CD4-positive, alpha-beta memory T cell (primary cell): ENCODE measurements at regions of chr3 and their contacts with region 1.

Region 1: GRCh38 chr3:3200632-3201212 is 21.2 kb upstream of the CRBN start:
- DNase-seq: peak in 1 of 5 donors; percentile 33
- H3K4me3 ChIP-seq: no peak overlapping the region
- H3K4me3 Mint-ChIP-seq: peak overlapping the region in 7 of 8 donors; percentile 10 to 74 (median 55)
- H3K27ac ChIP-seq: no peak overlapping the region
- H3K27ac Mint-ChIP-seq: peak overlapping the region in 3 of 7 donors; percentile 2 to 63 (median 4)
- H3K4me1 ChIP-seq: peaks cover 12% of the 10 kb centered on the region
- H3K4me1 Mint-ChIP-seq: peaks cover 16 to 32% (median 24%) of the 10 kb centered on the region in 4 donors
- H3K27me3 ChIP-seq: no peaks in the 10 kb centered on the region
- H3K27me3 Mint-ChIP-seq: peaks cover 0 to 2% of the 10 kb centered on the region in 2 donors

Region 2: GRCh38 chr3:2166552-2166951 is 1034.2 kb before region 1 on chr3:
- CTCF ChIA-PET with region 1: no interaction called
- POLR2A ChIA-PET with region 1: no interaction called
- intact Hi-C with region 1: no loop called
- DNase-seq: no peak
- H3K4me3 ChIP-seq: no peak overlapping the region
- H3K4me3 Mint-ChIP-seq: no peak overlapping the region
- H3K27ac ChIP-seq: no peak overlapping the region
- H3K27ac Mint-ChIP-seq: no peak overlapping the region
- H3K4me1 ChIP-seq: no peaks in the 10 kb centered on the region
- H3K4me1 Mint-ChIP-seq: no peaks in the 10 kb centered on the region
- H3K27me3 ChIP-seq: no peaks in the 10 kb centered on the region
- H3K27me3 Mint-ChIP-seq: no peaks in the 10 kb centered on the region

Region 3: GRCh38 chr3:3998140-3998922 is 797.6 kb after region 1 on chr3:
- CTCF ChIA-PET with region 1: interaction called, 20 read pairs
- POLR2A ChIA-PET with region 1: no interaction called
- intact Hi-C with region 1: no loop called
- DNase-seq: peak in 3 of 5 donors; percentile 3 to 12 (median 8)
- H3K4me3 ChIP-seq: no peak overlapping the region
- H3K4me3 Mint-ChIP-seq: no peak overlapping the region
- H3K27ac ChIP-seq: no peak overlapping the region
- H3K27ac Mint-ChIP-seq: no peak overlapping the region
- H3K4me1 ChIP-seq: no peaks in the 10 kb centered on the region
- H3K4me1 Mint-ChIP-seq: no peaks in the 10 kb centered on the region
- H3K27me3 ChIP-seq: no peaks in the 10 kb centered on the region
- H3K27me3 Mint-ChIP-seq: no peaks in the 10 kb centered on the region

Region 4: GRCh38 chr3:4271834-4272233 is 1071.1 kb after region 1 on chr3:
- CTCF ChIA-PET with region 1: interaction called, 15 read pairs
- POLR2A ChIA-PET with region 1: no interaction called
- intact Hi-C with region 1: no loop called
- DNase-seq: peak in 2 of 5 donors; percentile 1 to 11
- H3K4me3 ChIP-seq: no peak overlapping the region
- H3K4me3 Mint-ChIP-seq: peak overlapping the region in 1 of 8 donors; percentile 34
- H3K27ac ChIP-seq: no peak overlapping the region
- H3K27ac Mint-ChIP-seq: no peak overlapping the region
- H3K4me1 ChIP-seq: peaks cover 11% of the 10 kb centered on the region
- H3K4me1 Mint-ChIP-seq: peaks cover 6 to 22% (median 13%) of the 10 kb centered on the region in 4 donors
- H3K27me3 ChIP-seq: no peaks in the 10 kb centered on the region
- H3K27me3 Mint-ChIP-seq: no peaks in the 10 kb centered on the region

Region 5: DNA sequence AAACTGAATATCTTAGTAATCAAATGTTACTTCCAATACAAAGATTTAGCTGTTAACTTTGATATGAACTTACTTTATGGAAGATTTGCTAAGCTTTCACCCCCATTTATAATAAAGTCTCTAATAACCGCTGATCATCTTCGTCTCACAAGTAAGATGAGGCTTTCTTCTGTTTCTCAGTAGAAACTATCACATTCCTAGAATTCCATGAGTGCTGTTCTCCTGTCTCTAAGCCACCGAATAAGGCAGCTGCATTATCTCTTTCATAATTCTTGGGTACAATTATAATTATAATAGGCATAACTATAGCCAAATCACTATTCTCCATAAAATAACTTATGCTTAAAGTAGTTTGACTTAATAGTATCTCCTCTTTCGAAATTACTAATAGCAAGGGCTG is 1084.1 kb after region 1 on chr3:
- CTCF ChIA-PET with region 1: interaction called, 75 read pairs
- POLR2A ChIA-PET with region 1: no interaction called
- intact Hi-C with region 1: loop called (anchors 1 kb)
- DNase-seq: no peak
- H3K4me3 ChIP-seq: no peak overlapping the region
- H3K4me3 Mint-ChIP-seq: no peak overlapping the region
- H3K27ac ChIP-seq: no peak overlapping the region
- H3K27ac Mint-ChIP-seq: no peak overlapping the region
- H3K4me1 ChIP-seq: no peaks in the 10 kb centered on the region
- H3K4me1 Mint-ChIP-seq: no peaks in the 10 kb centered on the region
- H3K27me3 ChIP-seq: no peaks in the 10 kb centered on the region
- H3K27me3 Mint-ChIP-seq: peaks cover 0 to 2% of the 10 kb centered on the region in 2 donors

Region 6: GRCh38 chr3:4290272-4290893 is 1089.7 kb after region 1 on chr3:
- CTCF ChIA-PET with region 1: interaction called, 75 read pairs
- POLR2A ChIA-PET with region 1: no interaction called
- intact Hi-C with region 1: loop called (anchors 1 kb)
- DNase-seq: peak; percentile 31 to 42 (median 34)
- H3K4me3 ChIP-seq: no peak overlapping the region
- H3K4me3 Mint-ChIP-seq: no peak overlapping the region
- H3K27ac ChIP-seq: no peak overlapping the region
- H3K27ac Mint-ChIP-seq: no peak overlapping the region
- H3K4me1 ChIP-seq: no peaks in the 10 kb centered on the region
- H3K4me1 Mint-ChIP-seq: peaks cover 4 to 7% (median 6%) of the 10 kb centered on the region in 4 donors
- H3K27me3 ChIP-seq: no peaks in the 10 kb centered on the region
- H3K27me3 Mint-ChIP-seq: peaks cover 0 to 2% of the 10 kb centered on the region in 2 donors

Region 7: DNA sequence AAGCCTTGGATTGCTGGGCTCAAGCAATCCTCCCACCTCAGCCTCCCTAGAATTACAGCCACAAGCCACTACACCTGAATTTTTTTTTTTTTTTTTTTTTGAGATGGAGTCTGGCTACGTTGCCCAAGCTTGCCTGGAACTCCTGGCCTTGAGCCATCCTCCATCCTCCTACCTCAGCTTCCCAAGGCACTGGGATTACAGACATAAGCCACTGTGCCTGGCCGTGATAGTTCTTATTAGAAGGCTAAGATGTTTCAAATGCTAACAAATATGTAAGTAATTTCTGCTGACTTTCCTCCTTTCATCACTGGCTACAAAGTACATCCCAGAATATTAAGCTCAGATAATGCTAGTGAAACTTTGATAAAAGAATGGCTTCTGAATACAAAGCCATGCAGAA is 1096.8 kb after region 1 on chr3:
- CTCF ChIA-PET with region 1: interaction called, 63 read pairs
- POLR2A ChIA-PET with region 1: no interaction called
- intact Hi-C with region 1: no loop called
- DNase-seq: no peak
- H3K4me3 ChIP-seq: no peak overlapping the region
- H3K4me3 Mint-ChIP-seq: no peak overlapping the region
- H3K27ac ChIP-seq: no peak overlapping the region
- H3K27ac Mint-ChIP-seq: no peak overlapping the region
- H3K4me1 ChIP-seq: no peaks in the 10 kb centered on the region
- H3K4me1 Mint-ChIP-seq: peaks cover 0 to 8% (median 2%) of the 10 kb centered on the region in 4 donors
- H3K27me3 ChIP-seq: no peaks in the 10 kb centered on the region
- H3K27me3 Mint-ChIP-seq: no peaks in the 10 kb centered on the region